SK-N-SH (cell line): ENCODE measurements at regions of chr15 and their contacts with region 1.

Region 1: DNA sequence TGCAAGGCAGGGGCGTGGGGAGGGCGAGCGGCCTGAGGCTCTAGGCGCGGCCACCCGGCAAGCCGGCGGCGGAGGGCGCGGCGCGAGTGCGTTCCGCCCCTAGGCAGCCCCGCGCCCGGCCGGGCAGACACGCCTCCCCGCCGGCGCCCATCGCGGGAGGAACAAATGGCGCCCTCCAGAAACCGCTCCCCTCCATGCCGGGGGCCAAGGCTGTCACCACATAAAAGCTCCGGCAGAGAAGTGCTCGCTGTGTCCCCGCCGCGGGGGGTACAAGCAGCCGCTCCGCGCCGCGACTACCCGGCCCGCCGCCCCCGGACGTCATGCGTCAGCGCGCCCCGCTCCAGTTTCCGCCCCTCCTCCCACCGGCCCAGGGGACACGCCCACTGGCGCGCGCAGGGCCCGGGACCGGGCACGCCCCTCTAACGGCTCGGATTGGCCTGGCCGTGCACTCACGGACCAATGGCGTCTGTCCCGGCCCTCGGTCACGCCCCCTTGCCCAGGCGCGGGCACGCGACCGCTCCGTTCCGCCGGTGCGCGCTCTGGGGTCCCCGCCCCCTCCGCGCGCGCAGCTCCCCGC is 391 bp upstream of the KLF13 start:
- DNase-seq: peak; percentile 99
- H3K4me3 ChIP-seq: peak overlapping the region; percentile 81 to 85
- H3K27ac ChIP-seq: peak overlapping the region; percentile 82 to 94
- H3K4me1 ChIP-seq: peaks cover 5 to 33% of the 10 kb centered on the region in 2 experiments; a peak in 2 of 4 replicates
- H3K27me3 ChIP-seq: no peaks in the 10 kb centered on the region
- CTCF ChIP-seq: no peak
- EP300 ChIP-seq: no peak
- RAD21 ChIP-seq: no peak

Region 2: GRCh38 chr15:31215490-31216214 is 110.6 kb before region 1 on chr15:
- CTCF ChIA-PET with region 1: interaction called, 21 read pairs
- POLR2A ChIA-PET with region 1: interaction called, 12 read pairs
- DNase-seq: peak; percentile 94
- H3K4me3 ChIP-seq: peak overlapping the region; percentile 55 to 60
- H3K27ac ChIP-seq: peak overlapping the region in 1 of 2 experiments; percentile 72; a peak in 1 of 4 replicates
- H3K4me1 ChIP-seq: peaks cover 0 to 32% of the 10 kb centered on the region in 2 experiments; a peak in 2 of 4 replicates
- H3K27me3 ChIP-seq: no peaks in the 10 kb centered on the region
- CTCF ChIP-seq: peak; percentile 74
- EP300 ChIP-seq: no peak
- RAD21 ChIP-seq: peak; percentile 74

Region 3: DNA sequence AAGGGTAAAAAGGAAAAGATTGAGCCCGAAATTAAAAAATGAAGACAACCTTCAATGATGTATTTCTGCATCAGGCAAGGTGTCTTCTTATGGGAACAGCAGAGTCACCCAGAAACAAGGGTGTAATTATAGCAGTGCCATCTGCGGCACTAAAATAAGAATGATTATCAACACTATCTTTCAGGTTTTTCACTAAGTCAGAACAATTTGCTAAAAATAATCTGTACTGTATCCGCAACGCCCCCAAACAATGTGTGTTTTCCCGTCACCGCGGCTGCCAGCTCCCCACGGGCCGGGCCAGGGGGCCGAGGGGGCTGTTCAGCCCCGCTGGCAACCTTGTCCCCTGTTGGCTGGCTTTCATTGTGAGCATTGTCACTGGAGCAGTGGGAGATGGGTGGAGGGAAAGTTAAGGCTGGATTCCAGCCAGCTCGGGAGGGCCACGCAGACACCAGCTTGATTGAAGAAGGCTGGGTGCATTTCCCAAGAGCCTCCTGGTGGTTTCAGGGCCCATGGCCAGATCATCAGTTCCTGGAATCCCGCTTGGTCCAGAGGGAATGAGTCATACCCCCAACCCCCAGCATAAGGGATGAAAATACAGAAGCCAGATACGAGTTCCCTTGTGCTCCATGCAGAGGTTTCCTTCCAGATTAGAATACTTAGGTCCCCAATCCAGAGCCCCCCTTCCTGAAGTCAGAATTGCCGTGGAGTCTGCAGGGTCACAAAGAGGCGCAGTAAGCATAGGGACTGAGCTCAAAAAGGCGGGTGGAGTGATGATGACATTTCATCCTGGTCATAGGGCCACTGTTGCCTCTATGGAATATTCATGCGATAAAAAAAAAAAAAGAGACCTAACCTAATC is 89.8 kb before region 1 on chr15:
- CTCF ChIA-PET with region 1: no interaction called
- POLR2A ChIA-PET with region 1: interaction called, 22 read pairs
- DNase-seq: peak; percentile 86
- H3K4me3 ChIP-seq: no peak overlapping the region; a peak in 2 of 4 replicates
- H3K27ac ChIP-seq: peak overlapping the region; percentile 60 to 97
- H3K4me1 ChIP-seq: peaks cover 15 to 31% of the 10 kb centered on the region in 2 experiments; a peak in 3 of 4 replicates
- H3K27me3 ChIP-seq: no peaks in the 10 kb centered on the region
- CTCF ChIP-seq: no peak; the same call in 1 of the 2 replicates
- EP300 ChIP-seq: peak; percentile 61 to 70; a peak in 3 of 4 replicates
- RAD21 ChIP-seq: no peak; the same call in 1 of the 2 replicates

Region 4: GRCh38 chr15:31292391-31293015 is 33.7 kb before region 1 on chr15:
- CTCF ChIA-PET with region 1: no interaction called
- POLR2A ChIA-PET with region 1: no interaction called
- DNase-seq: no peak
- H3K4me3 ChIP-seq: no peak overlapping the region
- H3K27ac ChIP-seq: no peak overlapping the region
- H3K4me1 ChIP-seq: peaks cover 0 to 16% of the 10 kb centered on the region in 2 experiments; a peak in 2 of 4 replicates
- H3K27me3 ChIP-seq: 0 out of 2 replicates have a peak, but pooled peaks cover 7% of the 10 kb centered on the region
- CTCF ChIP-seq: no peak
- EP300 ChIP-seq: no peak
- RAD21 ChIP-seq: no peak

Region 5: DNA sequence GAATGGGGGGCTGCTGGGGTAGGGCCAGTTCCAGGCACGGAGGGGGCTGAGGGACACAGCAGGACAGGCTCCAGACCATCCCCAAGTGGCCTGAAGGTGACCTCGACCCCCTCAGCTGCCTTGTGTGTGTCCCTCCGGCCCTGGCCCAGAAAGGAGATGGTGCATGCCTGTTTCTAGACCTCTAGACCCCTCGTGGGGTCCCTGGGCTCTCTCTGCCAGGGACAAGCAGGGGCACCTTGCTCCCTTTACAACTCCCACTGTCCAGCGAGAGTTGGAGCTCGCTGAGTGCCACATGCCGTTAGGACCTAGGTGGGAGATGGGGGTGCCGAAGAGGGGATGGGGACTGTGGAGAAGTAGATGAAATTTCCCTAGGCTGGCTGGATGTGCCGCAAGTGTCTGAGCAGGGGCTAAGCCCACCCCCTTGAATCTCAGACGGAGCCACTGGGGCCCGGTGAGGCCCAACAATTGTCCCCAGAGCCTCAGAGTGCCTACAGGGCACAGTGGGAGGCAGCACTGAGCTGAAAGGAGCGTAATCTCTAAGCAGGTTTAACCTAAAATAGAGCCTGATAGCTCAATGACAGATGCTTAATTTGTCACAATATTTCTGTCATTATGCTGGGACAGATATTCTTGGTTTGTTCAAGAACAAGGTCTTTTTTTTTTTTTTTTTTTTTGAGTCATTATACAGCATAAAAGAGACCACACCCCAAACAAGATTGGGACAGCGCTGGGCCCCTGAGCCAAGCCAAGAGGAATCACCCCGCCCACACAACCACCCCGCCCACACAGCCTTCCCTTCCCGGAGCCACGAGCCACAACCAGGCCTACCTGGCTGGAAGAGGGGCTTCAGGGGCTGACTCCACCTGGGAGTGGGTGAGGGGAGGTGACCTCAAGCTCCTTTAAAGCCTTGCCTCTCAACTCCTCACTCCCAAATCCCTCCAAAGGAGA is 23.2 kb before region 1 on chr15:
- CTCF ChIA-PET with region 1: interaction called, 7 read pairs
- POLR2A ChIA-PET with region 1: interaction called, 17 read pairs
- DNase-seq: no peak
- H3K4me3 ChIP-seq: no peak overlapping the region
- H3K27ac ChIP-seq: no peak overlapping the region
- H3K4me1 ChIP-seq: peaks cover 0 to 73% of the 10 kb centered on the region in 2 experiments; a peak in 2 of 4 replicates
- H3K27me3 ChIP-seq: 0 out of 2 replicates have a peak, but pooled peaks cover 8% of the 10 kb centered on the region
- CTCF ChIP-seq: no peak
- EP300 ChIP-seq: no peak
- RAD21 ChIP-seq: no peak

Region 6: GRCh38 chr15:31352911-31353811 is 26.9 kb after region 1 on chr15:
- CTCF ChIA-PET with region 1: interaction called, 4 read pairs
- POLR2A ChIA-PET with region 1: interaction called, 10 read pairs
- DNase-seq: peak; percentile 81
- H3K4me3 ChIP-seq: peak overlapping the region in 1 of 2 experiments; percentile 43; a peak in 2 of 4 replicates
- H3K27ac ChIP-seq: peak overlapping the region; percentile 94 to 95
- H3K4me1 ChIP-seq: peaks cover 24 to 90% of the 10 kb centered on the region in 2 experiments
- H3K27me3 ChIP-seq: no peaks in the 10 kb centered on the region
- CTCF ChIP-seq: no peak
- EP300 ChIP-seq: peak; percentile 70 to 91; a peak in 3 of 4 replicates
- RAD21 ChIP-seq: peak; percentile 40